PC-3 (cell line): ENCODE measurements at regions of chr13 and their contacts with region 1.

Region 1: DNA sequence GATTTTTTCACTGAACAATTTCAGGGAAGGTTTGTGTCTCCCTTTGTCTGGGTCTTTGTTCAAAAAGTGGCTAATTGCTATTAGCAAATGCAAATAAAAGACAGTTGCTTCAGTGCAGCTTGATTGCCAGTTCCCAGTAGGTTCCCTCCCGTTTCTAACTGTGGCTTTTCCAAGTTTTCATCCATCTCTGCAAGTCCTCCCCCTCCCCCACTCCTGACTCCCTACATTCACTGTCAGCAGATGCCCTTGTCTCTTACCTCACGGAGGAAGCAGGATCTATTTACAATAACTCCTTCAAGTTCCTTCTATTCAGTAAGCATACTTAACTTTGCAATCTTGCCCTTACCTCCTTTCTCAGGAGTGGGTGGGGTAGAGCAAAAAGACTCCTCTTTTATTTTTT is 55.4 kb upstream of the SCEL start:
- DNase-seq: no peak
- ATAC-seq: no peak
- H3K4me3 ChIP-seq: no peak overlapping the region
- H3K27ac ChIP-seq: no peak overlapping the region
- H3K4me1 ChIP-seq: peaks cover 13% of the 10 kb centered on the region
- H3K27me3 ChIP-seq: no peaks in the 10 kb centered on the region
- CTCF ChIP-seq: no peak

Region 2: DNA sequence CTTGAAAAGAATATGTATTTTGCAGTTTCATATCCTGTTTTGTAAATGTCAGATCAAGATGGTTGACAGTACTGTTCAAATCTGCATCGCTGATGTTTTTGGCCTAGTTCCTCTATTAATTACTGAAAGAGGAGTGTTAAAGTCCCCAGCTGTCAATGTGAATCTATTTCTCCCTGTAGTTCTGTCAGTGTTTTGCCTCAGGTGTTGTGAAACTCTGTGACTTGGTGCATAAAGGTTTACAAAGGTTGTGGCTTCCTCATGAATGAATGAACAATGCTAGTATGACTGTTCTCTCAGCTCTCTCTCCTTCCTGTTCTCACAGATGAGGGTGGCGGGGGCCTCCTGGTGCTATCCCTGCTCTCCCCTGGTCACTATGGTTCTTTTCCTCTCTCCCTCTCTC is 295.6 kb before region 1 on chr13:
- CTCF ChIA-PET with region 1: no interaction called
- POLR2A ChIA-PET with region 1: no interaction called
- intact Hi-C with region 1: loop called (anchors 10 kb)
- DNase-seq: no peak
- ATAC-seq: no peak
- H3K4me3 ChIP-seq: no peak overlapping the region
- H3K27ac ChIP-seq: no peak overlapping the region
- H3K4me1 ChIP-seq: no peaks in the 10 kb centered on the region
- H3K27me3 ChIP-seq: no peaks in the 10 kb centered on the region
- CTCF ChIP-seq: no peak

Region 3: GRCh38 chr13:77343841-77344240 is 136.2 kb before region 1 on chr13:
- CTCF ChIA-PET with region 1: no interaction called
- POLR2A ChIA-PET with region 1: no interaction called
- intact Hi-C with region 1: loop called (anchors 1 kb)
- DNase-seq: peak; percentile 54
- ATAC-seq: peak; percentile 82
- H3K4me3 ChIP-seq: no peak overlapping the region
- H3K27ac ChIP-seq: no peak overlapping the region
- H3K4me1 ChIP-seq: peaks cover 13% of the 10 kb centered on the region
- H3K27me3 ChIP-seq: no peaks in the 10 kb centered on the region
- CTCF ChIP-seq: no peak

Region 4: DNA sequence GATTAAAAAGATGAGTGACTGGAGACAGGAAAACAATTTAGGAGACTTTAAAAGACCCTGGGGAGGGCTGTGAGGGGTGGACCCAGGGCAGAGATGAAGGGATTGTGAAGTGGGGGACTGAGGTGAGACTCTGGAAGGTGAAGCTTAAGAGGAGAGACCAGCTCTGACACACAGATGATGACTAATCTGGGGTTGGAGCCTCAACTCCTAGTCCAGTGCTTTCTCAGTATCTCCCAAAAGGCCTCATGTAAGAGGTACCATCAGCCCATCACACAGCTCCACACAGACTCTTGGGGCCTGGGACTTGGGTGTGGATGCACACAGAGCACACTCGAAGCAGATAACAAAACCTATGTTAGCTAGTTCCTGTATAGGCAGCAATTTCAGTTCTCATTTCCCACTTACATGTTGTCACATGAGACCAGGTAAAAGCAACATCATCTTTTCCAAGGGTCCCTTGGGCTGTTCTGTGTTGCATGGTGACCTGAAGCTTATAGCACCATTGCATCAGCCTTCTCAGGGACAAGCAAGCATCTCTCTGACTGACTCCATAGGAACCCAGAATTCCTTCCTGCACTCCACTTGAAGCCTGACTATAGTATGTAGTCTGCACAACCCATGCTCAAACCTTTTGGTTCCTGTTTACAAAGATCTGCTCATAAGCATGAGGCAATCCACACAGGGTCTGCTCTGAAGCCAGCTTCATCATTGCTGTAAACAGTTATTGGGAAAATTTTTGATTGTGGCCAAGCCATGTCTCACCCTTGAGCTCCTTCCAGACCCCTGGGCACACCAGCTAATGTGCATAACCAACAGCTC is 64.6 kb before region 1 on chr13:
- CTCF ChIA-PET with region 1: no interaction called
- POLR2A ChIA-PET with region 1: no interaction called
- intact Hi-C with region 1: loop called (anchors 2 kb)
- DNase-seq: no peak
- ATAC-seq: no peak
- H3K4me3 ChIP-seq: no peak overlapping the region
- H3K27ac ChIP-seq: no peak overlapping the region
- H3K4me1 ChIP-seq: peaks cover 16% of the 10 kb centered on the region
- H3K27me3 ChIP-seq: no peaks in the 10 kb centered on the region
- CTCF ChIP-seq: no peak